GM12878 (cell line): ENCODE measurements at regions of chr5 and their contacts with region 1.

Region 1: DNA sequence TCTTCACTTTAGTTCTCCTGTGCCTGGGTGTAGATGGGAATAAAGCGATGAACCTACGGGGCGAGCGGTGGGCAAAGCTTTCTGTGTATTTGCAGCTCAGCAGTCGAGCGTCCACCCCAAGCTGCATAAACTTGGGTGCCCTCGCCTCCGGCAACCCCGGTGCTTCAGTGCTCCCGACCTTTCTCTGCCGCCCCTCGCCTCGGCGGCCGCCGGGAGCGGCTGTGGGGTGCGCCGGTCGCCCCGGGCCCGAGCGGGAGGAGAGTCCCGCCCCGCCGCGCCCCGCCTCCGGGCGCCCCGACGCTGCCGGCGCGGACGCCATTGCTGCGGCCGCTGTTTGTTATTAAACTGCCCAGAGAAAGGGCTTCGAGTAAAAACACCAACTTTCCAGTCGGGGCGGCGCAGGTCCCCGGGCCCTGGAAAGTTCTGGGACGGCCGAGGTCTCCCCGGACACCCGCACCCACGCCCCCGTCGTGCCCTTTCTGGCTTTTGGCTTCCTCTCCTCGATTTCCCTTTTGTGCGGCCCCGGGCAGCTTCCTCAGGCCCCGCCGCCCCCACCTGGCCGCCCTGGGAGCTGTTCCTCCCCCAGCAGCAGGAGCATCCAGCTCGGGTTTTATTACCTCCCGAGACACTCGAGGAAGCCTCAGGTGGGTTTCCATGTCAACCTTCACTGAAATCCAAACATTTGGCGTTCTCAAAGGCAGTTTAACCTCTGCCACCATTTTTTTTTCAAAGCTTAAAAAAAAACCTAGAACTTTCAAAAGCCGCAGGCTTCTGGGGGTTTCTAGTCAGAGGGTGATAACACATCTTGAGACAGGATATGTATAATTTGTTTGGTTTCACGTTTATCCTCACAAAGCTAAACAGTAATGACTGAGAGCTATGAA is 334.3 kb downstream of the CWC27 start:
- DNase-seq: no peak
- ATAC-seq: peak; percentile 88
- H3K4me3 ChIP-seq: peak overlapping the region; percentile 86
- H3K27ac ChIP-seq: peak overlapping the region; percentile 76
- H3K4me1 ChIP-seq: peaks cover 28% of the 10 kb centered on the region
- H3K27me3 ChIP-seq: no peaks in the 10 kb centered on the region
- CTCF ChIP-seq: peak in 2 of 3 experiments; percentile 33 to 44; a peak in 3 of 6 replicates
- EP300 ChIP-seq: no peak
- POLR2A ChIP-seq: peak; percentile 75
- RAD21 ChIP-seq: peak; percentile 33; the same call in 1 of the 2 replicates

Region 2: GRCh38 chr5:64958757-64959391 is 144.2 kb before region 1 on chr5:
- CTCF ChIA-PET with region 1: interaction called, 9 read pairs
- POLR2A ChIA-PET with region 1: no interaction called
- RAD21 ChIA-PET with region 1: interaction called, 20 read pairs
- SMC1A ChIA-PET with region 1: interaction called, 6 read pairs
- in situ Hi-C with region 1: no loop called
- intact Hi-C with region 1: loop called (anchors 5 kb)
- DNase-seq: no peak
- ATAC-seq: peak; percentile 61
- H3K4me3 ChIP-seq: no peak overlapping the region
- H3K27ac ChIP-seq: no peak overlapping the region
- H3K4me1 ChIP-seq: no peaks in the 10 kb centered on the region
- H3K27me3 ChIP-seq: no peaks in the 10 kb centered on the region
- CTCF ChIP-seq: peak in 2 of 3 experiments; percentile 36 to 49; a peak in 4 of 6 replicates
- EP300 ChIP-seq: no peak
- POLR2A ChIP-seq: no peak
- RAD21 ChIP-seq: peak; percentile 86

Region 3: GRCh38 chr5:64971513-64971912 is 131.6 kb before region 1 on chr5:
- CTCF ChIA-PET with region 1: interaction called, 26 read pairs
- POLR2A ChIA-PET with region 1: interaction called, 6 read pairs
- RAD21 ChIA-PET with region 1: interaction called, 32 read pairs
- SMC1A ChIA-PET with region 1: interaction called, 23 read pairs
- in situ Hi-C with region 1: no loop called
- intact Hi-C with region 1: no loop called
- DNase-seq: no peak
- ATAC-seq: peak; percentile 60
- H3K4me3 ChIP-seq: no peak overlapping the region
- H3K27ac ChIP-seq: no peak overlapping the region
- H3K4me1 ChIP-seq: no peaks in the 10 kb centered on the region
- H3K27me3 ChIP-seq: no peaks in the 10 kb centered on the region
- CTCF ChIP-seq: peak in 2 of 3 experiments; percentile 27 to 47; a peak in 3 of 6 replicates
- EP300 ChIP-seq: no peak
- POLR2A ChIP-seq: no peak
- RAD21 ChIP-seq: peak; percentile 81

Region 4: DNA sequence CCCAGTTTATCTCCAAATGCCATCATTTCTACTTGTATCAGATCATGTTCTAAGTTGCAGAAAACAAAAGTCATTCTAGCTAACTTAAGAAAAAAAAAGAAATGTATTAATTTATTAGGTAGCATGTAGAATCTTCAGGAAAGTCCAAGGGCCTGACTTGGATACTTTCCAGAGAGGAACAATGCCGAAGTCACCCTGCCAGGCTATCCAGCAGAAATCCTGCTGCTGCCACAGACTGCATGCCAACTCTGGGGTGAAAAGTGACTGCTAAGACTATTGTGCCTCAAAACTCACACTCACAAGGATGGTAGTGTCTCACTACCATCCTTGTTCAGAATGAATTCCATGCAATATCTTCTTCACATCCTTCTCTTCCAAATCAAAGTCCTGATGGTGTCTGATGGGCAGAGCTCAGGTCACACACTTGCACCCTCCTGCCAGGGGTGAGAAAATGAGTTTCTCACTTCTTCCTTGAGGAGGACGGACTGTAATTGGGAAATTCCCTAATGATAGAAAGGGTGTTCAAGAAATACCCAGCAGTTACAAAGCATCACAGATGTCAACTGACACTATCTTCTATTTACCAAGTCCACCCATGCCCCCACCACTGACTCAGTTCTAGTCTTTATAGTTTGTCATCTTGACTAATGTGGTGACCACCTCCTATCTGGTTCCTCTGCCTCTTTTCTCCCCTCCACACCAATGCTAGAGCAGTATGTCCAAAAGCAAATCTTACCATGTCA is 55.0 kb before region 1 on chr5:
- CTCF ChIA-PET with region 1: interaction called, 7 read pairs
- POLR2A ChIA-PET with region 1: interaction called, 5 read pairs
- RAD21 ChIA-PET with region 1: interaction called, 12 read pairs
- SMC1A ChIA-PET with region 1: interaction called, 22 read pairs
- in situ Hi-C with region 1: no loop called
- intact Hi-C with region 1: no loop called
- DNase-seq: peak; percentile 71
- ATAC-seq: peak; percentile 86
- H3K4me3 ChIP-seq: no peak overlapping the region; the same call in 1 of the 2 replicates
- H3K27ac ChIP-seq: peak overlapping the region; percentile 87
- H3K4me1 ChIP-seq: peaks cover 60% of the 10 kb centered on the region
- H3K27me3 ChIP-seq: no peaks in the 10 kb centered on the region
- CTCF ChIP-seq: no peak
- EP300 ChIP-seq: peak in 1 of 2 experiments; percentile 54; a peak in 1 of 4 replicates
- POLR2A ChIP-seq: no peak
- RAD21 ChIP-seq: 0 out of 2 replicates have a peak, but pooled peaks have one; percentile 1

Region 5: GRCh38 chr5:65076251-65076869 is 26.7 kb before region 1 on chr5:
- CTCF ChIA-PET with region 1: interaction called, 12 read pairs
- POLR2A ChIA-PET with region 1: interaction called, 5 read pairs
- RAD21 ChIA-PET with region 1: interaction called, 5 read pairs
- SMC1A ChIA-PET with region 1: interaction called, 62 read pairs
- in situ Hi-C with region 1: no loop called
- intact Hi-C with region 1: no loop called
- DNase-seq: no peak
- ATAC-seq: peak; percentile 93
- H3K4me3 ChIP-seq: no peak overlapping the region
- H3K27ac ChIP-seq: no peak overlapping the region
- H3K4me1 ChIP-seq: peaks cover 17% of the 10 kb centered on the region
- H3K27me3 ChIP-seq: no peaks in the 10 kb centered on the region
- CTCF ChIP-seq: peak; percentile 35 to 54 (median 43)
- EP300 ChIP-seq: no peak
- POLR2A ChIP-seq: no peak
- RAD21 ChIP-seq: peak; percentile 66

Region 6: GRCh38 chr5:65276178-65276890 is 173.3 kb after region 1 on chr5:
- CTCF ChIA-PET with region 1: no interaction called
- POLR2A ChIA-PET with region 1: no interaction called
- RAD21 ChIA-PET with region 1: no interaction called
- SMC1A ChIA-PET with region 1: no interaction called
- in situ Hi-C with region 1: no loop called
- intact Hi-C with region 1: no loop called
- DNase-seq: no peak
- ATAC-seq: no peak
- H3K4me3 ChIP-seq: no peak overlapping the region
- H3K27ac ChIP-seq: no peak overlapping the region
- H3K4me1 ChIP-seq: no peaks in the 10 kb centered on the region
- H3K27me3 ChIP-seq: no peaks in the 10 kb centered on the region
- CTCF ChIP-seq: no peak
- EP300 ChIP-seq: no peak
- POLR2A ChIP-seq: no peak
- RAD21 ChIP-seq: no peak

Region 7: GRCh38 chr5:65695162-65695755 is 592.2 kb after region 1 on chr5:
- CTCF ChIA-PET with region 1: no interaction called
- POLR2A ChIA-PET with region 1: no interaction called
- RAD21 ChIA-PET with region 1: no interaction called
- SMC1A ChIA-PET with region 1: no interaction called
- in situ Hi-C with region 1: no loop called
- intact Hi-C with region 1: no loop called
- DNase-seq: peak; percentile 12
- ATAC-seq: peak; percentile 25; the same call in 1 of the 3 replicates
- H3K4me3 ChIP-seq: no peak overlapping the region
- H3K27ac ChIP-seq: no peak overlapping the region
- H3K4me1 ChIP-seq: peaks cover 4% of the 10 kb centered on the region; the same call in 1 of the 2 replicates
- H3K27me3 ChIP-seq: no peaks in the 10 kb centered on the region
- CTCF ChIP-seq: no peak
- EP300 ChIP-seq: no peak
- POLR2A ChIP-seq: no peak
- RAD21 ChIP-seq: no peak